Activated CD4-positive, alpha-beta T cell treated with anti-CD3 and anti-CD28 coated beads for 36 hours (primary cell): ENCODE measurements at regions of chr16 and their contacts with region 1.

Region 1: GRCh38 chr16:28538733-28539596 is at the start of gene NUPR1:
- DNase-seq: no peak
- ATAC-seq: no peak
- H3K4me3 Mint-ChIP-seq: no peak within 1 kb of the TSS
- H3K27ac Mint-ChIP-seq: no peak within 1 kb of the TSS
- H3K4me1 Mint-ChIP-seq: peaks cover 28% of the 10 kb centered on the region
- H3K27me3 Mint-ChIP-seq: no peaks in the 10 kb centered on the region
- total RNA-seq, gene NUPR1: not detected

Region 2: GRCh38 chr16:28522792-28523191 is 16.2 kb before region 1 on chr16:
- CTCF ChIA-PET with region 1: no interaction called
- POLR2A ChIA-PET with region 1: no interaction called
- intact Hi-C with region 1: loop called in 1 of 2 experiments (anchors 2 kb)
- DNase-seq: no peak
- ATAC-seq: no peak
- H3K4me3 Mint-ChIP-seq: no peak overlapping the region
- H3K27ac Mint-ChIP-seq: no peak overlapping the region
- H3K4me1 Mint-ChIP-seq: peaks cover 6% of the 10 kb centered on the region
- H3K27me3 Mint-ChIP-seq: no peaks in the 10 kb centered on the region